ENCODE measurements at regions of chr20 and their contacts with region 1.

Region 1: DNA sequence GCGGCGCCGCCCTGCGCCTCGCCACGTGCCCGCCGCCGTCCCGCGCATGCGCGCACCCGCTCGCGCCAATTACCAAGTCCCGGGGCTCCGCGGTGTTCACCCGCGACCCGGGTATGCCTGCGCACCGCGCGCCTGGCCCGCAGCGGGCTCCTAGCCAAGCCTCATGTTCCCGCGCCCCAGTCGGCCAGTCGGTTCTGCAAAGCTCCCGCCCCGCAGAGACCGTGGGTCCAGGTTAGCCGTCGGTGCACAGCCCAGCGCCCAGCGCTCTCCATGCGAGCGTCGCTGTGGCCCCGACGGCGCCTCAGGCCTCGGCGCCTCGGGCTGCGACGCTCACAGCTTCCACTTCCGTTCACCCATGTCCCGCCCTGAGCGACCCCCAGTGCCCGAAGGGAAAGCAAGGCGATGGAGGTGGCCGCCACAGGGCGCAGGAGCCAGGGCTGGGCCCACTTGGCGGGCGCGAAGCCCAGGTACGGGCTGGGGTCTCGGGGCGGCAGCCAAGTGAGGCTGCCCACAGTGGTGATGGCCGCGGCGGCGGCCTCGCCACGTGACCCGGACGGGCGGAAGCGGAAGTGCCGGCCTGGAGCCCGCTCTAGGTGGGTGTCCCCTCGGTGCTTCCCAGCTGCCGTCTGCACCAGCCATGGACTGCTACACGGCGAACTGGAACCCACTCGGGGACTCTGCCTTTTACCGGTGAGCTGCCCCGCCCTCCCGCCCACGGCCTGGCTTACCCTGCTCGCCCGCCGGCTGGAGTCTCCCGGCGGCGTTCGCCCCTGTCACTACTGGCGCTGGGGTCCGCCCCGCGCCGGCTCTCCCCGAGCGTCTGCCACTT is at the starts of genes PCED1A and VPS16:
- DNase-seq: peak; percentile 77
- H3K4me3 Mint-ChIP-seq: peak within 1 kb of the TSS; percentile 82
- H3K27ac Mint-ChIP-seq: peak within 1 kb of the TSS; percentile 76
- H3K4me1 Mint-ChIP-seq: peaks cover 12% of the 10 kb centered on the region
- H3K27me3 Mint-ChIP-seq: no peaks in the 10 kb centered on the region
- CTCF ChIP-seq: no peak
- total RNA-seq, gene PCED1A: 42.1 and 46.4 TPM in 2 replicates
- total RNA-seq, gene VPS16: 32.1 and 32.6 TPM in 2 replicates

Region 2: DNA sequence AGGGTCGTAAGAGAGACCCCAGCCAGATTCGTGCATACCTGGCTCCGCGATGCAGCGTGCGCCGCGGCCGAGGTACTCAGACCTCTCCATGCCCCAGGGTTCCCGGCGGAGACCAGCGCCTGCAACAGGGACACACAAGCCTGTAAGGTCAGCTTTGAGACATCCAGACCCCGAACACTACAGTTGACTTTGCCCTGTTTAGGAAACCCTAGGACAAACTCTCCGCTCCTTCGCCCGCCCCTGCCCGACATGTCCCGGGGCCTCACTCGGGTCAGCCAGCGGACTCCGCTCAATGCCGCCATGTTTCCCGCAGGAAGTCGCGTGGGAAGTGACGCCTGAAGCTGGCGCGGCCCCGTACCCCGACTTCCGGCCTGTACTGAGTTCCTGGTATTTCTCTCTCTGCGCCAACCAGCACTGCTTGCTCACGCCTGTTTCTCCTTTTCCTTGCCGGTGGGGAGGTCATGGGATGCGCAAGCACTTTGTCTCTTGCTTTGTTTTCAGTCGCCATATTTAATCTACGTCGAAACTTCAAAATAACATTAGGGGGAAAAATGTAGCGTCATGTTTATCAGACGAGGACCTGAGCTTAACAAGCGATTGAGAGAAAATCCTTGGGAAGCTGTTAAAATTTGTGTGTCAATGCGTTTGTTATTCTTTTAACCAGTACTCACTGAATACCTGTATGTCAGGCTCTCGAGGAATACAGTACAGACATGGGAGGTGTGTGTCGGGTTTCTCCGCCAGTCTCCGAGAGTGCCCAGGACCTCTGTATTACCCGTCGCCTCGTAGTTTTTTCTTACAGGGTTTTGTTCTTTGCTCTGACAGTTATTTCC is 176.2 kb before region 1 on chr20 and contains the start of gene IDH3B:
- CTCF ChIA-PET with region 1: no interaction called
- POLR2A ChIA-PET with region 1: interaction called, 17 read pairs
- intact Hi-C with region 1: no loop called
- DNase-seq: peak; percentile 87
- H3K4me3 Mint-ChIP-seq: peak within 1 kb of the TSS; percentile 77
- H3K27ac Mint-ChIP-seq: peak within 1 kb of the TSS; percentile 96
- H3K4me1 Mint-ChIP-seq: peaks cover 16% of the 10 kb centered on the region
- H3K27me3 Mint-ChIP-seq: peaks cover 14% of the 10 kb centered on the region
- CTCF ChIP-seq: no peak
- total RNA-seq, gene IDH3B: 80.5 and 102 TPM in 2 replicates

Region 3: DNA sequence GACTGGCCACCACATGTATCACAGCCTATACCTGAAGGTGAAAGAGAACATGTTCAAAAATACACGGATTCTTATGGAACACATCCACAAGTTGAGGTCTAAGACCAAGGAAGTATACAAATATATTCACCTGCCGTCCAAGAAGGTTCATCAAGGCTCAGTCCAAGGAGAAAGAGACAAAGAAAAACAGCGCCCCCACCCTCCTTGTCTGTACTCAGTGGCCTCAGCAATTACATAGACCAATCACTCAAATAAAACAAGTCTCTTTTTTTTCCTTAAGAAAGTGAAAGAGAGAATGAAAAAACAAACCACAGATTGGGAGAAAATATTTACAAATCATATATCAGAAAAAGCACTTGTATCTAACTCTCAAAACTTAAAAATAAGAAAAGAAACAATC is 59.4 kb before region 1 on chr20:
- CTCF ChIA-PET with region 1: no interaction called
- POLR2A ChIA-PET with region 1: no interaction called
- intact Hi-C with region 1: no loop called
- DNase-seq: no peak
- H3K4me3 Mint-ChIP-seq: no peak overlapping the region
- H3K27ac Mint-ChIP-seq: no peak overlapping the region
- H3K4me1 Mint-ChIP-seq: no peaks in the 10 kb centered on the region
- H3K27me3 Mint-ChIP-seq: peaks cover 44% of the 10 kb centered on the region
- CTCF ChIP-seq: no peak

Region 4: DNA sequence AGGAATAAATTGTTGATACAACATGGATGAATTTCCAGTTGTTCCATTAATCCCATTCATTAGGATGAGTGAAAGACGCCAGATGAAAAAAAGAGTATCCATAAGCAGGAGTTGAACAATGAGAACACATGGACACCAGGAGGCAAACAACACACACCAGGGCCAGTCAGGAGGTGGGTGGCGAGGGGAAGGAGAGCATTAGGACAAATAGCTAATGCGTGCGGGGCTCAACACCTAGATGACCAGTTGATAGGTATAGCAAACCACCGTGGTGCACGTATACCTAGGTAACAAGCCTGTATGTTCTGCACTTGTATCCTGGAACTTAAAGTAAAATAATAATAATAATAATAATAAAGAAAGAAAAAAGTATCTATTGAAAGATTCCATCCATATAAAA is 11.0 kb before region 1 on chr20:
- CTCF ChIA-PET with region 1: no interaction called
- POLR2A ChIA-PET with region 1: interaction called, 15 read pairs
- intact Hi-C with region 1: no loop called
- DNase-seq: no peak
- H3K4me3 Mint-ChIP-seq: no peak overlapping the region
- H3K27ac Mint-ChIP-seq: no peak overlapping the region
- H3K4me1 Mint-ChIP-seq: no peaks in the 10 kb centered on the region
- H3K27me3 Mint-ChIP-seq: peaks cover 47% of the 10 kb centered on the region
- CTCF ChIP-seq: no peak

Region 5: GRCh38 chr20:3032624-3033023 is 192.3 kb after region 1 on chr20:
- CTCF ChIA-PET with region 1: no interaction called
- POLR2A ChIA-PET with region 1: no interaction called
- intact Hi-C with region 1: no loop called
- DNase-seq: no peak
- H3K4me3 Mint-ChIP-seq: no peak overlapping the region
- H3K27ac Mint-ChIP-seq: no peak overlapping the region
- H3K4me1 Mint-ChIP-seq: no peaks in the 10 kb centered on the region
- H3K27me3 Mint-ChIP-seq: no peaks in the 10 kb centered on the region
- CTCF ChIP-seq: no peak

Measured in MCF 10A (cell line).